Dendritic cell treated with granulocyte-macrophage colony-stimulating factor and Interleukin-4, amounts not matched to agents 40 ng/mL and 50 ng/mL, for 4 days (primary cell): ENCODE measurements at regions of chrX and their contacts with region 1.

Region 1: GRCh38 chrX:66110112-66110511 is 53.9 kb upstream of the HEPH start:
- H3K4me3 Mint-ChIP-seq: no peak overlapping the region
- H3K27ac Mint-ChIP-seq: no peak overlapping the region
- H3K4me1 Mint-ChIP-seq: peaks cover 6% of the 10 kb centered on the region
- H3K27me3 Mint-ChIP-seq: peaks cover 11% of the 10 kb centered on the region

Region 2: DNA sequence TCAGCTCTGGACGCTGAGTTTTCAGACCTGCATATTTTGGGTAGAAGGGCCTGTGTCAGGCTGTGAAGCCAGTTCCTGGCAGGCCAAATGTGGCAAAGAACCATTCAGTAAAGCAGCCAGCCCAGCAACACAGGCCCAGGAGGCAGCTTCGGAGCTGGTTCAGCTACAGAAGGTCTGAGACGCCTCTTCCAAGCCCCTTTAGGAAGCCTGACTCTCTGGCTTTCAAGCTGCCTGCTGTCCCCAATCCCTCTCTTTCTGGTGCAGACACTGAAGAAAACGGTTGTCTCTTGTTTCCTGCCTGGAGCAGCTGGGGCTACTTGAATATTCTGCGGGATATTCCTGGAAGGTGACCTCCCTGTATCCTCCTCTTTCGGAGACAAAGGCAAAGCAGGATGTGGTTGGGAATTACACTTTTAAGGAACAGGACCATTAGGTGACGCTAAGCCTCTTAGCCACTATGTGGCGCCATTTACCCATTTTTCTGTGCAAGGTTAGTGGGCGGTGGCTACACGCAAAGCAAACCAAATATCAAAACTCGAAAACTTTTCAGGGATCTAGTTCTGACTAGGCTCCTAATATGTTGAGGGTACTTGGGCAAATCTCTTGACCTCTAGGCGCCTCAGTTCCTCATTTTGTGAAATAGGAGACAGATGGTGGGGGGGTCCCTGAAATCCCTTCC is 528.3 kb before region 1 on chrX:
- intact Hi-C with region 1: loop called (anchors 5 kb)
- H3K4me3 Mint-ChIP-seq: no peak overlapping the region
- H3K27ac Mint-ChIP-seq: no peak overlapping the region
- H3K4me1 Mint-ChIP-seq: peaks cover 15% of the 10 kb centered on the region
- H3K27me3 Mint-ChIP-seq: peaks cover 8% of the 10 kb centered on the region

Region 3: GRCh38 chrX:65997978-65998717 is 112.0 kb before region 1 on chrX:
- intact Hi-C with region 1: loop called (anchors 10 kb)
- H3K4me3 Mint-ChIP-seq: no peak overlapping the region
- H3K27ac Mint-ChIP-seq: peak overlapping the region; percentile 60
- H3K4me1 Mint-ChIP-seq: peaks cover 54% of the 10 kb centered on the region
- H3K27me3 Mint-ChIP-seq: peaks cover 8% of the 10 kb centered on the region

Region 4: GRCh38 chrX:66030505-66031317 is 79.4 kb before region 1 on chrX:
- intact Hi-C with region 1: loop called (anchors 5 kb)
- H3K4me3 Mint-ChIP-seq: no peak overlapping the region
- H3K27ac Mint-ChIP-seq: no peak overlapping the region
- H3K4me1 Mint-ChIP-seq: peaks cover 11% of the 10 kb centered on the region
- H3K27me3 Mint-ChIP-seq: peaks cover 17% of the 10 kb centered on the region

Region 5: GRCh38 chrX:66046612-66047235 is 63.4 kb before region 1 on chrX:
- intact Hi-C with region 1: loop called (anchors 5 kb)
- H3K4me3 Mint-ChIP-seq: no peak overlapping the region
- H3K27ac Mint-ChIP-seq: peak overlapping the region; percentile 37
- H3K4me1 Mint-ChIP-seq: peaks cover 31% of the 10 kb centered on the region
- H3K27me3 Mint-ChIP-seq: peaks cover 11% of the 10 kb centered on the region

Region 6: DNA sequence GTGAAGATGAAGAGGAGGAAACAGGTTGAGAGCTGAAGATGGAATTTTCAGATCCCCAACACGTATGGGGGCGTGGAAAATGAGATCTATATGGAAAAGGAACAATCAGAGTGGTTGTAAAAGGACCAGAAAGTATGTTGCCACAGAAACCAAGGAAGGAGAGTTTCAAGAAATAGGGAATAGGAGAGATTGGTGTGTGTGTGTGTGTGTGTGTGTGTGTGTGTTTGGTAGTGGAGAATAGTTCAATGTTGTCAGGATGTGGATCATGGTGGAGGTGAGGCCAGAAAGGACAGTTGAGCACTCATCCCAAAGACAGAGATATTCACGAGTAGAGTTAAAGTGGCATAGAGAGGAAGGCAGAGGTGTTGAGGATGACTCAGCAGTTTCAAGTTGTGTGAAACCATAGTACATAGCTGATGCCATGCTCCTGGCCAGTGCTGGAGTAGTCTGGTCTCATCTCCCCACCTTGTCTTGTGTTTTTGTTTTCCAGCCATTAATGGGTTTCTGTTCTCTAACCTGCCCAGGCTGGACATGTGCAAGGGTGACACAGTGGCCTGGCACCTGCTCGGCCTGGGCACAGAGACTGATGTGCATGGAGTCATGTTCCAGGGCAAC is 90.0 kb after region 1 on chrX:
- intact Hi-C with region 1: no loop called
- H3K4me3 Mint-ChIP-seq: no peak overlapping the region
- H3K27ac Mint-ChIP-seq: no peak overlapping the region
- H3K4me1 Mint-ChIP-seq: peaks cover 22% of the 10 kb centered on the region
- H3K27me3 Mint-ChIP-seq: peaks cover 1% of the 10 kb centered on the region

Region 7: DNA sequence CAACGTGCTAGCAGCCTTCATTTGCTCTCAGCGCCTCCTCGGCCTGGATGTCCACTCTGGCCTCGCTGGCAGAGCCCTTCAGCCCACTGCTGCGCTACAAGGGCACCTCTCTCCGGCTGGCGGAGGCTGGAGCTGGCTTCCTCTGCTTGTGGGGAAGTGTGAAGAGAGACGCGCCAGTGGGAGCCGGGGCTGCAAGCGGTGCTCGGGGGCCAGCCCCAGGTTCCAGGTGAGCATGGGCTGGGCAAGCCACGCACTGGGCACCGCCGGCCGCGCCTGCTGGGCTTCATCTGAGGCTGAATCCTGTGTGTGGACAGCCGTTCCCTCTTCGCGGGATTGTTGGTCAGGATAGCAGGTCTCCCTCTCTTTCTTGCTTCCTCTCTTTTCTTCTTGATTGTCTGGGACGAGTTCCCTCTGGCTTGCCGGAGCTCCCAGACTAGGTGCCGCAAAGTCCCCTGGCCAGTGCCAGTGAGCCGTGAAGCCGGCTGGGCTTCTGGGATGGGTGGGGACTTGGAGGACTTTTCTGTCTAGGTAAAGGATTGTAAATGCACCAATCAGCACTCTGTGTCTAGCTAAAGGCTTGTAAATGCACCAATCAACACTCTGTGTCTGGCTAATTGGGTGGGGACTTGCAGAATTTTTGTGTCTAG is 219.0 kb after region 1 on chrX:
- intact Hi-C with region 1: no loop called
- H3K4me3 Mint-ChIP-seq: no peak overlapping the region
- H3K27ac Mint-ChIP-seq: no peak overlapping the region
- H3K4me1 Mint-ChIP-seq: no peaks in the 10 kb centered on the region
- H3K27me3 Mint-ChIP-seq: no peaks in the 10 kb centered on the region